A673 (cell line): ENCODE measurements at regions of chrX and their contacts with region 1.

Region 1: GRCh38 chrX:44872817-44873414 is at the start of gene KDM6A:
- DNase-seq: peak; percentile 99
- H3K4me3 ChIP-seq: peak within 1 kb of the TSS; percentile 97
- H3K27ac ChIP-seq: peak within 1 kb of the TSS; percentile 98
- H3K4me1 ChIP-seq: peaks cover 12% of the 10 kb centered on the region
- H3K27me3 ChIP-seq: no peaks in the 10 kb centered on the region
- CTCF ChIP-seq: no peak
- total RNA-seq, gene KDM6A: 37.0 and 40.9 TPM in 2 replicates

Region 2: GRCh38 chrX:44265559-44265958 is 607.4 kb before region 1 on chrX:
- CTCF ChIA-PET with region 1: no interaction called
- POLR2A ChIA-PET with region 1: no interaction called
- intact Hi-C with region 1: no loop called
- DNase-seq: no peak
- H3K4me3 ChIP-seq: no peak overlapping the region
- H3K27ac ChIP-seq: no peak overlapping the region
- H3K4me1 ChIP-seq: no peaks in the 10 kb centered on the region
- H3K27me3 ChIP-seq: no peaks in the 10 kb centered on the region
- CTCF ChIP-seq: no peak

Region 3: GRCh38 chrX:44542567-44543325 is 330.2 kb before region 1 on chrX and contains the start of gene FUNDC1:
- CTCF ChIA-PET with region 1: no interaction called
- POLR2A ChIA-PET with region 1: no interaction called
- intact Hi-C with region 1: loop called (anchors 10 kb)
- DNase-seq: peak; percentile 99
- H3K4me3 ChIP-seq: peak within 1 kb of the TSS; percentile 65
- H3K27ac ChIP-seq: peak within 1 kb of the TSS; percentile 79
- H3K4me1 ChIP-seq: peaks cover 12% of the 10 kb centered on the region
- H3K27me3 ChIP-seq: no peaks in the 10 kb centered on the region
- CTCF ChIP-seq: peak; percentile 62
- total RNA-seq, gene FUNDC1: 41.0 and 44.2 TPM in 2 replicates

Region 4: DNA sequence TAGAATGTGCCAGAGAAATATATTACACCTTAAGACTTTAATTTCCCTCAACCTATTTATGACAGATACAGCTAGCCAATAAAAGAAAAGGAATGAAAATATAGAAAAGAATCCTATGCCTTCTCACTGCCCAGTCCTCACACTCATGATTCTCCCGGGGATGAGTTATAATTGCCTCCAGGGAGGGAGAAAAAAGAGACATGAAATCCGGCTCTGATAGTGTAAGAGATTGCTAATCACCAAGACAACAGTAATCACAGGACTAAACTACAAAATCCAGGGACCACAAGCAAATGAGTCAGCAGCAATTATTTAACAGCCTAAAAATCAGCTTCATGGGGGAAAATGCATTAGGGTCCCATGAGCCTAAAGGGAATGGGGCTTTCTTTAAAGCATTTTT is 124.9 kb before region 1 on chrX:
- CTCF ChIA-PET with region 1: no interaction called
- POLR2A ChIA-PET with region 1: no interaction called
- intact Hi-C with region 1: no loop called
- DNase-seq: peak; percentile 68
- H3K4me3 ChIP-seq: no peak overlapping the region
- H3K27ac ChIP-seq: no peak overlapping the region
- H3K4me1 ChIP-seq: peaks cover 5% of the 10 kb centered on the region
- H3K27me3 ChIP-seq: no peaks in the 10 kb centered on the region
- CTCF ChIP-seq: no peak

Region 5: GRCh38 chrX:44795945-44796450 is 76.9 kb before region 1 on chrX:
- CTCF ChIA-PET with region 1: no interaction called
- POLR2A ChIA-PET with region 1: interaction called, 17 read pairs
- intact Hi-C with region 1: no loop called
- DNase-seq: no peak
- H3K4me3 ChIP-seq: no peak overlapping the region
- H3K27ac ChIP-seq: no peak overlapping the region
- H3K4me1 ChIP-seq: no peaks in the 10 kb centered on the region
- H3K27me3 ChIP-seq: no peaks in the 10 kb centered on the region
- CTCF ChIP-seq: no peak

Region 6: DNA sequence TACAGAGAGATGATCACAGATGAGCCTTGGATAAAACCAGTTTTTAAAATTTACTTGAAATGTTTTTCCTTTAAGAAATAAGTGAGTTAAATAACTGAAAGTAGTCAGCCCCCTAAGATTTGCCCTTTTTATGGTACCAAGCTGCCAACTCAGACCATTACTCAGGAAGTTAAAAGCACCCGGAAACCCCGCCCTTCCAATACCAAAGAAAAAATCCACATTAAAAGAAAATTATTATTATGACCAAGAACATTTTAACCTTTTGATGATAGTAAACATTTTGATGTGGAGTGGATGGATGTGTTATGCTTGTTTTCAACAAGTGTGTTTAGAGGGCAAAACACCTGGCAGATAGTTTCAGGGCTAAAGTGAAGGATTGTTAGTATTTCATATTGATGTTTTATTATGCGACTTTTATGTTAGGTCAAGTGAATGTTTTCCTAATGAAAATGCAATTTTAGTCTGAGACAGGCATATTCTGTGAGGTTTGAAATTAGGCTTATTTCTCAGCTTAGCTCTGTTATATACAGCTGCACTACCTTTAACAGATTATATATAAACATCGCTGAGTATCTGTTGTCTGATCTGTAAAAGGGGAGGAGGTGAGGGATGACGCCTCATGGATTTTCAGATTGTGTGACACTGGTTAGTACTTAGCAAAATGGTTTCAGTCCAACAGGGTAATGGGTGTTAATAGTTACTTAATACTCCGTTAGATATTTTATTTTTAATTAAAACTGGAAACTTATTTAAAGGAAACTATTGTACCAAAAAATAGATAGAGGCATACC is 89.1 kb after region 1 on chrX:
- CTCF ChIA-PET with region 1: no interaction called
- POLR2A ChIA-PET with region 1: interaction called, 31 read pairs
- intact Hi-C with region 1: no loop called
- DNase-seq: no peak
- H3K4me3 ChIP-seq: no peak overlapping the region
- H3K27ac ChIP-seq: no peak overlapping the region
- H3K4me1 ChIP-seq: peaks cover 17% of the 10 kb centered on the region
- H3K27me3 ChIP-seq: no peaks in the 10 kb centered on the region
- CTCF ChIP-seq: no peak

Region 7: DNA sequence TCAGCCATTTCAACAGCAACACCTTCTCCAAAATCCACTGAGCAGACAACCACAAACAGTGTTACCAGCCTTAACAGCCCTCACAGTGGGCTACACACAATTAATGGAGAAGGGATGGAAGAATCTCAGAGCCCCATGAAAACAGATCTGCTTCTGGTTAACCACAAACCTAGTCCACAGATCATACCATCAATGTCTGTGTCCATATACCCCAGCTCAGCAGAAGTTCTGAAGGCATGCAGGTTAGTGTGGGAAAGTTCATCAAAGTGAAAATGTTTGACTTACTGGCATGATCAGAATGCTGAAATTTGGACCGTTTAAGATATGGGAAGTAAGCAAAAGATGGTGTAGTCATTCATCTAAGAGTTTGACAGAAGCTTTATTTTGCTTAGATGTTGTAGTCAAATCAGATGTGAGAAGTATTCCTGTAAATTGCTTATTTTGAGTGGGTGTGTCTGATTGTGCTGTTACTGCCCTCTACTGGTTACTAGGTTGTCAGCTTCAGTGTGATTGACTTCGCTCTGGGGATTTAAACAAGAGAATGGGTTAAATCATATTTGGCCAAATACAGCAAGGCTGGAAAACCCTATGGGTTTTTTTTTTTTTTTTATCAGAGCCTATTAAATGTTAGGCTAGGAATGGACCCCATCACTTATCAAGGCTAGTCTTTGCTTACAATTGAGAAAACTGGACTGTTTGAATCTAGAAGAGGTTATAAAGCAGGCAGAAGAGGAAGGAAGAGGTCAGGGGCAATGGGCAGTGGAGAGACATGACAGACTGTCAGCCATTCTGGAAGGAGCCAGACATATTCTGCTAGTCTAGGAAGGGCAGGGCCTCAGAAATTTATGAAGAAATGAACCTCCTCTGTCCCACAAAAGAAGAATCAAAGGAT is 197.4 kb after region 1 on chrX:
- CTCF ChIA-PET with region 1: interaction called, 5 read pairs
- POLR2A ChIA-PET with region 1: no interaction called
- intact Hi-C with region 1: loop called (anchors 5 kb)
- DNase-seq: peak; percentile 77
- H3K4me3 ChIP-seq: no peak overlapping the region
- H3K27ac ChIP-seq: no peak overlapping the region
- H3K4me1 ChIP-seq: peaks cover 14% of the 10 kb centered on the region
- H3K27me3 ChIP-seq: no peaks in the 10 kb centered on the region
- CTCF ChIP-seq: peak; percentile 88